ENCODE measurements at regions of chr20 and their contacts with region 1.

Region 1: DNA sequence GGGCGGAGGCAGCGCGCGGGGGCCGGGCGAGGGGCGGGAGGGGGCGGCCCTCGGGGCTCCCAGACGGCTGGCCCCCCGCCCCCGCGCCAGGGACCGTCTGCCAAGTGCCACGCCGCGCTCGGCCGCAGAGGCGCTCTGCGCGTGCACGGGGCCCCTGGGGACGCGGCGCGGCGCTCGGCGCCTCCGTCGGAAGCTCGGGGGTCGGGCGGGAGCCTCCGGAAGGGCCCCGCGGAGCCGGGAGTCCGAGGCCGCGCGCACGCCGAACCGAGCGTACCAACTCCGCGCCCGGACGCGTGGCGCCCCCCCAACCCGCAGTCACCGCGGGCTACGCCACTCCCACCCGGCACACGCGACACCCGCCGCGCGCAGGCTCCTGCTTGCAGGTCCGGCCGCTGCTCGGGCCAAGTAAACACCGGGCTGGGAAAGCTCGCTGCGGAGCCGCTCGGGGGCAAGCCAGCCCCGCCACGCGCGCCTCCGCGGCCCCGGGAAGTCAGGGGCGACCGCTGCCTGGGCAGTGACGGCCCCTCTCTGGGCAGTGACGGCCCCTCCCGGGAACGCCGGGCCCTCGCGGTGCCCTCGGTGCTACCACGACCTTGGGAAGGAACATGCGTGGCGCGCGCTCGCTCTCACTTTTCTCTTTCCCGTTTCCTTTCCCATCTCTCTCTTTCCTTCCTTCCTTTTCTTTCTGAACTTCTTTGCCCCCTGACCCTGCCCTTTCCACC is 384 bp upstream of the PREX1 start:
- DNase-seq: peak; percentile 64
- H3K4me3 Mint-ChIP-seq: peak overlapping the region; percentile 77
- H3K27ac Mint-ChIP-seq: no peak overlapping the region
- H3K4me1 Mint-ChIP-seq: peaks cover 40% of the 10 kb centered on the region
- H3K27me3 Mint-ChIP-seq: peaks cover 20% of the 10 kb centered on the region

Region 2: GRCh38 chr20:48224520-48224919 is 603.7 kb before region 1 on chr20:
- CTCF ChIA-PET with region 1: no interaction called
- intact Hi-C with region 1: no loop called
- DNase-seq: no peak
- H3K4me3 Mint-ChIP-seq: no peak overlapping the region
- H3K27ac Mint-ChIP-seq: no peak overlapping the region
- H3K4me1 Mint-ChIP-seq: no peaks in the 10 kb centered on the region
- H3K27me3 Mint-ChIP-seq: peaks cover 2% of the 10 kb centered on the region

Region 3: DNA sequence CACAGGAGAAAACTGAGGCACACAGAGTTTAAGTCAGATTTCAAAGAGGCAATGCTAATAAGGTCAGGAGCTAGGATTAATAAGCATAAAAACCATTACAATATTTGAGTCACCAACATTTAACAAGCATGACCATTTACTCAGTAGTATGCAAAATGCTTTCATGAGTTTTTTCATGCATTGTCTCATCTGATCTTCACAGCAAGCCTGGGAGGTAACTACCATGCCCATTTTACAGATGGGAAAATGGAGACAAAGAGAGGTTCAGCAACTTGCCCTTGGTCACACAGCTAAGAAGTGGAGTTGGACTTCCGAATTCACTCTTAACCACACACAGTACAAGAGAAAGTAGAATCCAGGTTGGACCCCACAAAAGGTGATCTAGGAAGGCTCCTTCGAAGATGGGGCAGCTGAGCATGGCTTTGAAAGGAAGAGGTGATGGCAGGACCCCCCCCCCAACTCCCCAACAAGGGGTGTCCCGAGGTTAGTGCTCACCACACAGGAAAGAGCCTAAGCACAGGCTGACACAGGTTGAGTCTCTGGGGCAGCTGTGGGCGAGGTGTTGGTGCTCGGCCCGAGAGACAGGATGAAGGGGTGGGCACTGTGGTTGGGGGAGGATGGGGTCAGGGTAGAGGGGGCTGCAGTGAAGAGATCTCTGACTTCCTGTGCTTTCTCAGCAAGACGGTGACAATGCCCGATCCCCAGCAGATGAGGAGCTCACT is 109.2 kb before region 1 on chr20:
- CTCF ChIA-PET with region 1: no interaction called
- intact Hi-C with region 1: loop called (anchors 2 kb)
- DNase-seq: peak; percentile 32
- H3K4me3 Mint-ChIP-seq: peak overlapping the region; percentile 11
- H3K27ac Mint-ChIP-seq: no peak overlapping the region
- H3K4me1 Mint-ChIP-seq: peaks cover 51% of the 10 kb centered on the region
- H3K27me3 Mint-ChIP-seq: no peaks in the 10 kb centered on the region

Region 4: DNA sequence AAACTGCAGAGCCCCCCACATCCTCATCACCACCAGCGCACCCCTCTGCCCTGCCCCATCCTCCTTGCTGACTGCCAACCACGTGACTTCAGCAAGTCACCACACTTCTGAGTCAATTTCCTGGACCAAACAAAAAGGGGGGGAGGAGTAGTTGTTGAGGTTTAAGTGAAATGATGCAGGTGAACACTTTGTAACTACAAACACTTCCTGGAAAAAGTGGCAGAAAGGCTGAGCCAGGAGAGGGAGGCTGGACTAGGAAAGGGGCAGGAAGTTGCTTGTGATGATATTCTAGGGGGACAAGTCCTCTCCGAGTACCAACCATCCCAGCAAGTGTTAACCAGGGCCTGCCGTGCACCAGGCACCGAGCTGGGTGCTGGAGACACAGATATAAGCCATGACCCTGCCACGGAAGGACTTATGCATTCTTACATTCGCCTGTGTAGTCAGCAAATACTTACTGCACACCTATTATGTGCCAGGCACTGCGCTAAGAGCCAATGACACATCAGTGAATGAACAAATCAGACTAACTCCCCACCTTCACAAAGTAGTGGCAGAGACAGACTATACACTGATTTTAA is 67.7 kb before region 1 on chr20:
- CTCF ChIA-PET with region 1: no interaction called
- intact Hi-C with region 1: loop called (anchors 1 kb)
- DNase-seq: peak; percentile 82
- H3K4me3 Mint-ChIP-seq: peak overlapping the region; percentile 57
- H3K27ac Mint-ChIP-seq: peak overlapping the region; percentile 95
- H3K4me1 Mint-ChIP-seq: peaks cover 58% of the 10 kb centered on the region
- H3K27me3 Mint-ChIP-seq: no peaks in the 10 kb centered on the region

Region 5: GRCh38 chr20:48776306-48776705 is 51.9 kb before region 1 on chr20:
- CTCF ChIA-PET with region 1: no interaction called
- intact Hi-C with region 1: no loop called
- DNase-seq: no peak
- H3K4me3 Mint-ChIP-seq: no peak overlapping the region
- H3K27ac Mint-ChIP-seq: no peak overlapping the region
- H3K4me1 Mint-ChIP-seq: peaks cover 37% of the 10 kb centered on the region
- H3K27me3 Mint-ChIP-seq: no peaks in the 10 kb centered on the region

Region 6: GRCh38 chr20:48787861-48788375 is 40.3 kb before region 1 on chr20:
- CTCF ChIA-PET with region 1: no interaction called
- intact Hi-C with region 1: loop called (anchors 1 kb)
- DNase-seq: no peak
- H3K4me3 Mint-ChIP-seq: no peak overlapping the region
- H3K27ac Mint-ChIP-seq: no peak overlapping the region
- H3K4me1 Mint-ChIP-seq: peaks cover 50% of the 10 kb centered on the region
- H3K27me3 Mint-ChIP-seq: peaks cover 4% of the 10 kb centered on the region

Region 7: GRCh38 chr20:48904365-48905296 is 76.4 kb after region 1 on chr20:
- CTCF ChIA-PET with region 1: interaction called, 11 read pairs
- intact Hi-C with region 1: loop called (anchors 5 kb)
- DNase-seq: peak; percentile 85
- H3K4me3 Mint-ChIP-seq: no peak overlapping the region
- H3K27ac Mint-ChIP-seq: no peak overlapping the region
- H3K4me1 Mint-ChIP-seq: peaks cover 5% of the 10 kb centered on the region
- H3K27me3 Mint-ChIP-seq: no peaks in the 10 kb centered on the region

Region 8: GRCh38 chr20:49046087-49046900 is 218.1 kb after region 1 on chr20 and contains the start of gene CSE1L:
- CTCF ChIA-PET with region 1: no interaction called
- intact Hi-C with region 1: loop called (anchors 5 kb)
- DNase-seq: peak; percentile 96
- H3K4me3 Mint-ChIP-seq: peak within 1 kb of the TSS; percentile 98
- H3K27ac Mint-ChIP-seq: peak within 1 kb of the TSS; percentile 99
- H3K4me1 Mint-ChIP-seq: peaks cover 38% of the 10 kb centered on the region
- H3K27me3 Mint-ChIP-seq: no peaks in the 10 kb centered on the region
- total RNA-seq, gene CSE1L: 86.1 to 88.9 TPM

Measured in activated naive CD4-positive, alpha-beta T cell treated with anti-CD3 and anti-CD28 coated beads for 36 hours (primary cell).